HAP-1 (cell line): ENCODE measurements at regions of chr21 and their contacts with region 1.

Region 1: GRCh38 chr21:37700641-37701202 is 215.5 kb downstream of the KCNJ6 start:
- DNase-seq: peak; percentile 72 to 81
- H3K4me3 ChIP-seq: no peak overlapping the region
- H3K4me1 ChIP-seq: no peaks in the 10 kb centered on the region
- H3K27me3 ChIP-seq: peaks cover 3% of the 10 kb centered on the region; the same call in 1 of the 2 replicates

Region 2: GRCh38 chr21:37430184-37430821 is 270.4 kb before region 1 on chr21:
- in situ Hi-C with region 1: no loop called
- DNase-seq: no peak
- H3K4me3 ChIP-seq: no peak overlapping the region
- H3K4me1 ChIP-seq: peaks cover 11% of the 10 kb centered on the region
- H3K27me3 ChIP-seq: no peaks in the 10 kb centered on the region

Region 3: GRCh38 chr21:38355992-38356797 is 655.5 kb after region 1 on chr21:
- in situ Hi-C with region 1: loop called (anchors 25 kb)
- DNase-seq: peak in 1 of 2 experiments; percentile 64
- H3K4me3 ChIP-seq: no peak overlapping the region
- H3K4me1 ChIP-seq: no peaks in the 10 kb centered on the region
- H3K27me3 ChIP-seq: no peaks in the 10 kb centered on the region

Region 4: DNA sequence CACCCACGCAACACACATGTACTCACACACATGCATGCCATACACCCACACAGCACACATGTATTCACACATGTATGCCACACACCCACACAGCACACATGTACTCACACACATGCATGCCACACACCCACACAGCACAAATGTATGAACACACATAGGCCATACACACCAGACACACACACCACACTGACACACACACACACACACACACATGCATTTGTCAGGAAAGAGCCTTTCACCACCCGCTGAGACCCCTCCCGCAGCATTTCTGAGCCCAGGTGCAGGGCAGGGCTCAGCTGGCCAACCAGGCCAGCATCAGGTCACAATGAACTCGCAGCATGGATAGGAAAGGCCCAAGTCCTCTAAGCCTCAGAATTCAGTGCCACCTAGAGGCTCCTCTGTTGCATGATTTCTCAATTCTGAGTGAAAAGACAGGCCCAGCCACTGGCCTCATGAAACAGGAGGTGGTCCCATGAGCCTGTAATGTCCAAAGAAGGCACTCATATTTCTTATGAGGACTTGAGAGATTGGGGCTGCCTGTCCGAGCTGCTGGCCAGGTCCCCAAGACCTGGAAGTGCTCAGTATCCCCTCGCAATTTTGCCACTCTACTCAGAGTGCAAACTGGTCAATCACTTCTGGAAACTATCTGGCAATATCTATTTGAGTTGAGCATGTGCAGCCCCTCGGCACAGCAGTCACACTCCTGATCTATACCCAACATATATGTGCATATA is 1425.2 kb after region 1 on chr21:
- in situ Hi-C with region 1: loop called (anchors 25 kb)
- DNase-seq: peak; percentile 6 to 25
- H3K4me3 ChIP-seq: no peak overlapping the region
- H3K4me1 ChIP-seq: no peaks in the 10 kb centered on the region
- H3K27me3 ChIP-seq: 0 out of 2 replicates have a peak, but pooled peaks cover 6% of the 10 kb centered on the region